ENCODE measurements at regions of chr15 and their contacts with region 1.

Region 1: GRCh38 chr15:63466378-63467192 is 37.8 kb upstream of the USP3 start:
- DNase-seq: peak; percentile 72 to 77 (median 74)
- H3K4me3 ChIP-seq: no peak overlapping the region
- H3K4me3 Mint-ChIP-seq: peak overlapping the region in 1 of 8 donors; percentile 20
- H3K27ac ChIP-seq: no peak overlapping the region
- H3K27ac Mint-ChIP-seq: peak overlapping the region in 6 of 7 donors; percentile 47 to 89 (median 86)
- H3K4me1 ChIP-seq: peaks cover 9% of the 10 kb centered on the region
- H3K4me1 Mint-ChIP-seq: peaks cover 18 to 26% (median 24%) of the 10 kb centered on the region in 4 donors
- H3K27me3 ChIP-seq: no peaks in the 10 kb centered on the region
- H3K27me3 Mint-ChIP-seq: peaks cover 0 to 2% of the 10 kb centered on the region in 2 donors

Region 2: GRCh38 chr15:63402498-63403253 is 63.9 kb before region 1 on chr15:
- CTCF ChIA-PET with region 1: no interaction called
- POLR2A ChIA-PET with region 1: no interaction called
- intact Hi-C with region 1: no loop called
- DNase-seq: peak in 4 of 5 donors; percentile 34 to 44 (median 40)
- H3K4me3 ChIP-seq: no peak overlapping the region
- H3K4me3 Mint-ChIP-seq: no peak overlapping the region
- H3K27ac ChIP-seq: no peak overlapping the region
- H3K27ac Mint-ChIP-seq: no peak overlapping the region
- H3K4me1 ChIP-seq: no peaks in the 10 kb centered on the region
- H3K4me1 Mint-ChIP-seq: peaks cover 0 to 4% (median 2%) of the 10 kb centered on the region in 4 donors
- H3K27me3 ChIP-seq: no peaks in the 10 kb centered on the region
- H3K27me3 Mint-ChIP-seq: peaks cover 3 to 8% of the 10 kb centered on the region in 2 donors

Region 3: DNA sequence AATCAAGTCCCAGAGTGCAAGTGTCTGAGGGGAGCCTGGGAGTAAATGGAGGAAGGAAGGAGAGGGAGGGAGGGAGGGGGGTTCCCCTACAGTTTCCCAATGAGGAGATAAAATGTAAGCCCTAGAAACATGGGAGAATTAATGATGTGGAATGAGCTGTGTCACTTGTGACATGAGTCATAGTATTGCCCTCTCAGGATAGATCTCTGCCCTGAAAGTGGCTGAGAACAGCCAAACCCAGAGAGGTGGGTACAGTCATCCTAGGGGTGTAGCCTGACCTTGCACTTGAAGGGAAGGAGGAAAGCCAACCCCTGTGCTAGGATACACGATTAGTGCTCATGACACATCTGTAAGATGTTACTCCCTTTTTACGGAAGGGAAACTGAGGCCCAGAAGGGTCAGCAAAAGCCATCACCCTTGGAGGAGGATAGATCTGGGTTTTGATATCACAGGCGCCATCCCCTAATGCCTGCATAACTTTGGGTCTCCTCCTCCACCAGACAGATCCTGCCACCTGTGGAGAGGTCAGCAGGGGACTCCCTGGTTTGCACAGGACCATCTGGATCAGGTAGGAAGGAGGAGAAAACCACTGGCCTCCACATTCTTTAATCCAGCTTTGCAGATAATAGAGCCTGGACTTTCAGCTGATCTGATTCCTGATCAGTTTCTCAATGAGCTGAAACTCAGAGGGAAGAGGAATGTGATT is 14.7 kb after region 1 on chr15:
- CTCF ChIA-PET with region 1: interaction called, 36 read pairs
- POLR2A ChIA-PET with region 1: interaction called, 32 read pairs
- intact Hi-C with region 1: loop called (anchors 1 kb)
- DNase-seq: peak in 1 of 5 donors; percentile 60
- H3K4me3 ChIP-seq: no peak overlapping the region
- H3K4me3 Mint-ChIP-seq: peak overlapping the region in 6 of 8 donors; percentile 31 to 84 (median 78)
- H3K27ac ChIP-seq: peak overlapping the region; percentile 81
- H3K27ac Mint-ChIP-seq: peak overlapping the region; percentile 92 to 100 (median 100)
- H3K4me1 ChIP-seq: peaks cover 97% of the 10 kb centered on the region
- H3K4me1 Mint-ChIP-seq: peaks cover 52 to 85% (median 70%) of the 10 kb centered on the region in 4 donors
- H3K27me3 ChIP-seq: no peaks in the 10 kb centered on the region
- H3K27me3 Mint-ChIP-seq: no peaks in the 10 kb centered on the region

Region 4: GRCh38 chr15:63497642-63498467 is 31.3 kb after region 1 on chr15:
- CTCF ChIA-PET with region 1: interaction called, 28 read pairs
- POLR2A ChIA-PET with region 1: interaction called, 906 read pairs
- intact Hi-C with region 1: no loop called
- DNase-seq: peak; percentile 81 to 94 (median 83)
- H3K4me3 ChIP-seq: peak overlapping the region in 1 of 2 donors; percentile 42
- H3K4me3 Mint-ChIP-seq: no peak overlapping the region
- H3K27ac ChIP-seq: peak overlapping the region; percentile 81
- H3K27ac Mint-ChIP-seq: no peak overlapping the region
- H3K4me1 ChIP-seq: peaks cover 96% of the 10 kb centered on the region
- H3K4me1 Mint-ChIP-seq: peaks cover 34 to 82% (median 62%) of the 10 kb centered on the region in 4 donors
- H3K27me3 ChIP-seq: no peaks in the 10 kb centered on the region
- H3K27me3 Mint-ChIP-seq: no peaks in the 10 kb centered on the region

Region 5: DNA sequence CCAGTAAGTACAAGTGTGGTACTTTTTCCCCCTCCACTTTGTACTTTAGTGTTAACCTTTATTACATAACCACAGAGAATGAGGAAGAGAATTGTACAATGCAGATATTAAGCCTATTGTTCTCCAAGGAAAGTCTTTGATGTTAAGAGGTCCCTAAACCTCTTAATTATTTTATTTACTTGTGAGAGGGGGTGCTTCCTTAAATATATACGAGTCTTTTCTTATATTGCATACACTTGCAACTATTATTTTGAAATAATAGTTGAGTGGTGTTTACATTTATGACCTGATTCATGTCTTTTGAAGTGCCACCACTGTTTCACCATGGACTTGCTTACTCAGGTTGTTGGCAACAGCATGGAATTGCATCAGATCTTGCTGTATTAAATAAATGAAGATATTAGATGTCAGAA is 48.0 kb after region 1 on chr15:
- CTCF ChIA-PET with region 1: interaction called, 21 read pairs
- POLR2A ChIA-PET with region 1: interaction called, 11 read pairs
- intact Hi-C with region 1: no loop called
- DNase-seq: no peak
- H3K4me3 ChIP-seq: no peak overlapping the region
- H3K4me3 Mint-ChIP-seq: peak overlapping the region in 7 of 8 donors; percentile 33 to 84 (median 59)
- H3K27ac ChIP-seq: no peak overlapping the region
- H3K27ac Mint-ChIP-seq: peak overlapping the region; percentile 19 to 91 (median 70)
- H3K4me1 ChIP-seq: peaks cover 100% of the 10 kb centered on the region
- H3K4me1 Mint-ChIP-seq: peaks cover 67 to 97% (median 87%) of the 10 kb centered on the region in 4 donors
- H3K27me3 ChIP-seq: no peaks in the 10 kb centered on the region
- H3K27me3 Mint-ChIP-seq: no peaks in the 10 kb centered on the region

Region 6: DNA sequence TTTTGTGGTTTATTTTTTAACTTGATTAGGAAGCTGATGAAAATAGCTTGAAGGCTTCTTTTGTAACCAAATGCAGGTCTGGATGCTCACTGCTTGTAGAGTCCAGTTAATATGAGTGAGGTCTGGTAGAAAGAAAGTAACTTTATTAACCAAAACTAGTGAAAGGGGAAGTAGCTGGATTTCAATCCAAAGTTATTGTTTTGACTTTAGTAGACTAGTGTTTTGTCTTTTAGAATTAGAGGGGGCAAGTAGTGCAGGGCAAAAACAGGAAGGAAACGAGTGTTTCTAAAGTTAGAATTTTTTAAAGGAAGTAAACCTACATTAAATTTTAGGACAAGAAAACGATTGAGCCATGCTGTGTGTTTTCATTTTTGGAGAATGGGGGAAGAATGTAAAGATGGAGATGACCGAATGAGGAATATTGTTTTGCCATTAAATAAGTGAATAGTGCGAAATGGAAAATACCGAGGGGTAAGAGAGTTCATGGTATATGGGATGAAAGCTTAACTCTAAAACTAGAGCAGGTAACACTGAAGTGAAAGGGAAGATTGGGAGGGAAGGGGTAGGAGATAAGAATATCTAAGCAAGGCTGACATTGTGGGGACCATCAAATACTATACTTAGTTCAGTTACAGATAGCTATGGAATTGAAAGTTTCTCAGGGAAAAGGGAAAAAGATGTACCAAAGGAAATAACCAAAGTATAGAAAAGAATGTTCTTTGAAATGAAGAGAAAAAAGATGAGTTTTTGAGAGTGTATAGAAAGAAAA is 77.9 kb after region 1 on chr15:
- CTCF ChIA-PET with region 1: interaction called, 18 read pairs
- POLR2A ChIA-PET with region 1: interaction called, 3 read pairs
- intact Hi-C with region 1: loop called (anchors 2 kb)
- DNase-seq: no peak
- H3K4me3 ChIP-seq: no peak overlapping the region
- H3K4me3 Mint-ChIP-seq: peak overlapping the region in 5 of 8 donors; percentile 51 to 58 (median 52)
- H3K27ac ChIP-seq: no peak overlapping the region
- H3K27ac Mint-ChIP-seq: peak overlapping the region; percentile 4 to 81 (median 58)
- H3K4me1 ChIP-seq: peaks cover 29% of the 10 kb centered on the region
- H3K4me1 Mint-ChIP-seq: peaks cover 40 to 69% (median 47%) of the 10 kb centered on the region in 4 donors
- H3K27me3 ChIP-seq: no peaks in the 10 kb centered on the region
- H3K27me3 Mint-ChIP-seq: no peaks in the 10 kb centered on the region

Region 7: GRCh38 chr15:63610200-63610841 is 143.7 kb after region 1 on chr15:
- CTCF ChIA-PET with region 1: interaction called, 17 read pairs
- POLR2A ChIA-PET with region 1: interaction called, 3 read pairs
- intact Hi-C with region 1: no loop called
- DNase-seq: peak; percentile 68 to 85 (median 75)
- H3K4me3 ChIP-seq: no peak overlapping the region
- H3K4me3 Mint-ChIP-seq: peak overlapping the region; percentile 3 to 60 (median 34)
- H3K27ac ChIP-seq: peak overlapping the region; percentile 33
- H3K27ac Mint-ChIP-seq: peak overlapping the region; percentile 27 to 97 (median 93)
- H3K4me1 ChIP-seq: peaks cover 33% of the 10 kb centered on the region
- H3K4me1 Mint-ChIP-seq: peaks cover 27 to 47% (median 39%) of the 10 kb centered on the region in 4 donors
- H3K27me3 ChIP-seq: no peaks in the 10 kb centered on the region
- H3K27me3 Mint-ChIP-seq: no peaks in the 10 kb centered on the region

Region 8: GRCh38 chr15:63708126-63708772 is 241.7 kb after region 1 on chr15:
- CTCF ChIA-PET with region 1: no interaction called
- POLR2A ChIA-PET with region 1: no interaction called
- intact Hi-C with region 1: no loop called
- DNase-seq: peak; percentile 62 to 82 (median 72)
- H3K4me3 ChIP-seq: no peak overlapping the region
- H3K4me3 Mint-ChIP-seq: peak overlapping the region in 7 of 8 donors; percentile 8 to 78 (median 58)
- H3K27ac ChIP-seq: peak overlapping the region; percentile 62
- H3K27ac Mint-ChIP-seq: peak overlapping the region in 5 of 7 donors; percentile 94 to 97 (median 96)
- H3K4me1 ChIP-seq: peaks cover 42% of the 10 kb centered on the region
- H3K4me1 Mint-ChIP-seq: peaks cover 16 to 28% (median 21%) of the 10 kb centered on the region in 4 donors
- H3K27me3 ChIP-seq: no peaks in the 10 kb centered on the region
- H3K27me3 Mint-ChIP-seq: no peaks in the 10 kb centered on the region

Region 9: DNA sequence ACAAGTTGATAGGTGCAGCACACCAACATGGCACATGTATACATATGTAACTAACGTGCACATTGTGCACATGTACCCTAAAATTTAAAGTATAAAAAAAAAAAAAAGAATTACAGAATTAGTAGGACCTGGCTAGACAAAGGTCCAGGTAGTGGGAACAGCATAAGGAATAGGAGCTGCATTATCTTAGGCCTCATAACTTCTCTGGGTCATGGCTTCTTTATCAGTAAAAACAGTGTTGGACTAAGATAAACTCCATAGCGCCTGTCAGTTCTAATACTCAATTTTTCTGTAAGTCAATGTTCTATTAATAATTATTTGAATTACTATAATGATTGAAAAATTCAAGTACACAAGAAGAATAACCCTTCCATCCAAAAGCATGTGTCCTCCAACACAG is 268.9 kb after region 1 on chr15:
- CTCF ChIA-PET with region 1: no interaction called
- POLR2A ChIA-PET with region 1: no interaction called
- intact Hi-C with region 1: no loop called
- DNase-seq: no peak
- H3K4me3 ChIP-seq: no peak overlapping the region
- H3K4me3 Mint-ChIP-seq: no peak overlapping the region
- H3K27ac ChIP-seq: no peak overlapping the region
- H3K27ac Mint-ChIP-seq: peak overlapping the region in 1 of 7 donors; percentile 71
- H3K4me1 ChIP-seq: no peaks in the 10 kb centered on the region
- H3K4me1 Mint-ChIP-seq: peaks cover 3 to 14% (median 4%) of the 10 kb centered on the region in 4 donors
- H3K27me3 ChIP-seq: no peaks in the 10 kb centered on the region
- H3K27me3 Mint-ChIP-seq: no peaks in the 10 kb centered on the region

Measured in CD4-positive, alpha-beta memory T cell (primary cell).